Activated naive CD4-positive, alpha-beta T cell treated with anti-CD3 and anti-CD28 coated beads for 36 hours (primary cell): ENCODE measurements at regions of chr10 and their contacts with region 1.

Region 1: DNA sequence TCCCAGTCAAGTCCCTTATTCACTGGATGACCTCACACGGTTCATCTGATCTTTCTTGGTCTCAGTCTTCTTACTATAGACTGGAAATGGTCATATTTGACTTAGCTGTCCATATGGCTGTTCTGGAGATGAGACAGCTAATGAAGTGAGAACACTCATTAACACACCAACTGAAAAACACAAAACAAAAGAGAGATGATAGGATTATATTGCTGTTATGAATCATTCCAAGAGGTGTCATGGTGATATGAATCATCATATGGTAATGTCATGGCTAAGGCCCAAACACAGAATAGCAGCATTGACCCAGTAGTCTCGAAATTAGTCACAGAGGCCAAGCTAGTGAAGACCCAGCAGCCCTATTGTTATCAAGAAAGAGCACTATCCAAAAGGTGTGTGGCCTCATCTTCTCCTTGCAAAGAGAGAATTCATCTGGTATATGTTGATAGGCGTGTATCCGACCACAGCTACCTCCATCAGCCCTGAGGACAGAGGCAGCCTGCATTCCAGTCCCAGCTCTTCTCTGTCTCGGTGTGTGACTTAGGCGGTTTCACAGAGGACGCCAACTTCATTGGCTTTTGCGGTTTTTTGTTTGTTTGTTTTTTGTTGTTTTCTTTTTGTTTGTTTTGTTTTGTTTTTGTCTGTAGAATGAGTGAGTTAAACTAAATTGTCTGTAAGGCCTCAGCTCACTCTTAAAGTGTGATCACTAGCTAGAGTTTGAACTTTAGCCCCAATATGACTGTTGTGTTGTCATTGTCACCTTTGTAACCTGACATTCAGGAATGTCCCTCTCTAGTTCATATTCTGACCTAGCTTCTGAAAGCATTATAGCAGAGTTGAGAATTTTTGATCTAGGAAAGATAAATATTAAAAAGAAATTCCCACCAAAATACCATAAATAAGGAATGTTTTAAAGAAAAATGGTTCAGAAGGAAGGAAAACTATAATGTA is 97.4 kb upstream of the PDCD4 start:
- DNase-seq: peak; percentile 66
- H3K4me3 Mint-ChIP-seq: no peak overlapping the region
- H3K27ac Mint-ChIP-seq: peak overlapping the region; percentile 77
- H3K4me1 Mint-ChIP-seq: peaks cover 47% of the 10 kb centered on the region
- H3K27me3 Mint-ChIP-seq: no peaks in the 10 kb centered on the region

Region 2: GRCh38 chr10:109173121-109173520 is 1601.2 kb before region 1 on chr10:
- CTCF ChIA-PET with region 1: no interaction called
- intact Hi-C with region 1: no loop called
- DNase-seq: no peak
- H3K4me3 Mint-ChIP-seq: no peak overlapping the region
- H3K27ac Mint-ChIP-seq: no peak overlapping the region
- H3K4me1 Mint-ChIP-seq: no peaks in the 10 kb centered on the region
- H3K27me3 Mint-ChIP-seq: no peaks in the 10 kb centered on the region

Region 3: DNA sequence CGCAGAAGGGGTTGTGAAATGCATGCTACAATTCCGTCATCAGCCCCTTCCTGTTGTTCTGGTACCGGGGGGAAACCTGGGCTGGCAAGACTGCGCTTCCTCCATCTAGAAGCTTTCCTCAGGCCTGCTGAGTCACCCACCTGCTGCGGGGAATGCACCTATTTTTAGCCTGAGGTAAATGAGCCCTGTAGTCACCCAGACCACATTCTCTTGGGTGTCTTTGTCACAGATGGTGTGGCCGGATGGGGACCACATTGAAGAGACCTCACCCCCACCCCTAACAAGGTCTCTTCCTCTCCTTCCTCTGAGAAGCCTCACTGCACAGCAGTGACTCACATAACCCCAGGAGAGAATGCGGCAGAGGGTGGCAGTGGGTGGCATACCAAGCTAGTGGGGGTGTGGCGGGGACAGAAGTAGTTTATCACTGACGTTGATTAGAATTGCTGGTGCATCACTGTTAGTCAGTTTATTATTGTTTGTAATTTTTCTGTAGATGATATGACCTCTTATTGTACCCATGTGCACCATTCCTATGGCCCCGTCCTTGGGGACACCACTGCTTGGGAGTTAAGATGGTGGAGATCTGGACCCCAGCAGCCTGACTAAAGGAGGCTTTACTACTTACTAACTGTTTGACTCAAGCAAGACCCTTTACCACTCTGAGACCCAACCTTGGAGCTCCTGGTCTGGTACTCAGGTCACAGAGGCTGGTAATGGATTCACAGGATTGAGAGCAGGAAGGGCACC is 359.6 kb before region 1 on chr10:
- CTCF ChIA-PET with region 1: no interaction called
- intact Hi-C with region 1: loop called (anchors 5 kb)
- DNase-seq: peak; percentile 98
- H3K4me3 Mint-ChIP-seq: peak overlapping the region; percentile 41
- H3K27ac Mint-ChIP-seq: peak overlapping the region; percentile 84
- H3K4me1 Mint-ChIP-seq: peaks cover 73% of the 10 kb centered on the region
- H3K27me3 Mint-ChIP-seq: no peaks in the 10 kb centered on the region

Region 4: GRCh38 chr10:110746254-110746826 is 28.0 kb before region 1 on chr10:
- CTCF ChIA-PET with region 1: interaction called, 7 read pairs
- intact Hi-C with region 1: loop called (anchors 1 kb)
- DNase-seq: peak; percentile 64
- H3K4me3 Mint-ChIP-seq: no peak overlapping the region
- H3K27ac Mint-ChIP-seq: no peak overlapping the region
- H3K4me1 Mint-ChIP-seq: peaks cover 72% of the 10 kb centered on the region
- H3K27me3 Mint-ChIP-seq: no peaks in the 10 kb centered on the region

Region 5: DNA sequence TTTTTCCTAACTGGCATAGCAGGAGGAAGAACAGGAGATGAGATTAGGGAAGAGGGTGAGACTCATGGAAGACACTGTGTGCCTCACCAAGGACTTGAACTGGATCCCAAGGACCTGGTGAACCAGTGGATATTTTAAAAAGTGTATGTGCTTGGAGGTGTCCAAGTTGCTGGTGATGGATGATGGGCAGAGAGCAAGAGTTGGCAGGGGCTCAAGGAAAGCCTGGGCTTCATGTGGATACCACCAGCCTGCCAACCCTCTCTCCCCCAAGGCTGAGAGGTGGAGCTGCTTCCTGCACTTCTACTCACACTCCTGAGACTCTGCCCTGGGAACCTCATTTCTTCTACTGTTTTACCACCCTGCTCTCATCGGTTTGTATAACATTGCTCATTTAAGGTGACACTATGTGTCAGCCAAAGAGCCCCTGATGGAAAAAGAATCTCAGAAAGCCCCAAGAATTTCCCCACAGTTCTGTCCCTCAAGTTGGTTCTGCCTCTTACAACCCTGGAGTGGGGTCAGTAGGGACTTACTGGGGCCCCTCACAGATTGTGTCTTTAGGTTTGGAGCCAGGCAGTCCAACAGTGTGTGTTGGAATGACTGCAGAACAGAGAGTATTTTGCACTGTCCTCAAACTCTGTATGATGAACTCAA is 41.1 kb after region 1 on chr10:
- CTCF ChIA-PET with region 1: no interaction called
- intact Hi-C with region 1: loop called (anchors 1 kb)
- DNase-seq: peak; percentile 56
- H3K4me3 Mint-ChIP-seq: no peak overlapping the region
- H3K27ac Mint-ChIP-seq: peak overlapping the region; percentile 15
- H3K4me1 Mint-ChIP-seq: peaks cover 30% of the 10 kb centered on the region
- H3K27me3 Mint-ChIP-seq: no peaks in the 10 kb centered on the region

Region 6: DNA sequence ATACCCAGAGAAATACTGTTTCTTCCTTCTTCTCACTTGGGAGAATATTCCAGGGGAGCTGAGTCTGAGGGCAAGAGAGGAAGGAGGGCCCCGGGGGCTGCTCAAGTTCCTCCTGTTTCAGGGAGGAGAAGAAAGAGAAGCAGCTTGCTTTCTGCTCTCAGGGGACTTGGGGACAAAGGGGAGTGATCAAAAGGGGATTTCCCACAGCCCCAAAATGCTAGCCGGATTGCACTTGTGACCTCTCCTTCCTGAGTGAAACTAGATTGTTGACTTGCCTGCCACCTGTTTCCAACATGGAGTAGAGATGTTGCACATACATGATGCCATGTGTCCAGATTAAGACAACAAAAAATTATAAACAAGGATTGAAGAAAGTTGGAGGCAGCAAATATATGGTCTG is 68.7 kb after region 1 on chr10:
- CTCF ChIA-PET with region 1: no interaction called
- intact Hi-C with region 1: loop called (anchors 1 kb)
- DNase-seq: peak; percentile 77
- H3K4me3 Mint-ChIP-seq: no peak overlapping the region
- H3K27ac Mint-ChIP-seq: peak overlapping the region; percentile 65
- H3K4me1 Mint-ChIP-seq: peaks cover 43% of the 10 kb centered on the region
- H3K27me3 Mint-ChIP-seq: no peaks in the 10 kb centered on the region

Region 7: DNA sequence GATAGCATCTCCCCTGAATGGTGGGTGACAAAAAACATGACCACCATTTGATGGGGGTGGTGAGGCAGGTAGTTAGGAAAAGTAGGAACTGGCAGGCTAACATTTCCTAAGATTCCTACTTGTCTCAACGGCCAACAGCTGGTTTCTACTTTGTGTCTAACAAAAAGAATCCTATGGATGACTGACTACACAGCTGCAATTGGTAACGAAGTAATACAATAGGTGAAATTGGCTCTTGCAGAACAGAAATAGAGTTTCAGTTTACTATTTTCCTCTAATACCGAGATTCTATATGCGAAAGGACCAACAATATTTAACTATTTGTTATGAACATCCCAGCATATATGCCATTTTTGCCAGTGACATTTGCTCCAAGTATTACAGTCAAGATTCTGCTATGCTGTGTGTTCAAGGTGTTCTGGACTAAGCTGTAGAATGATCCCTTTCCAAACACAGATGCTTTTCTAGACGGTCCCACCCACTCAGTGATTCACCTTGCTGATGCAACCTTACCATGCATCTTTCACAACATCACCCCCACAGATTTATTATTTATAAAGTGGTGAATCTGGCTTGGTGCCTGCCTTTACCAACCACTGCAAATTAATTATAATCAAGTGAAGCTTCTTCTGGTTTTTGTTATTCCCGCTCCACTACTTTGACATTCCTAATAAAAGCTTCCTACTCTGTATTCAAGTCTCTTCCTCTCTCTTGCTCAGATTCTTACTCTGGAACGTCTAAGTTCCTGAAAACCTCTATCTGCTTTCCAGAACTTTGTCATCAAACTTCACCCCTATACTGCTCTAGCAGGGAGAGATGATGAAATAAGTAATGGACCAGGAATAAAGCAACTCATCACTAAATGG is 127.8 kb after region 1 on chr10:
- CTCF ChIA-PET with region 1: no interaction called
- intact Hi-C with region 1: loop called (anchors 1 kb)
- DNase-seq: peak; percentile 76
- H3K4me3 Mint-ChIP-seq: peak overlapping the region; percentile 17
- H3K27ac Mint-ChIP-seq: peak overlapping the region; percentile 74
- H3K4me1 Mint-ChIP-seq: peaks cover 44% of the 10 kb centered on the region
- H3K27me3 Mint-ChIP-seq: no peaks in the 10 kb centered on the region

Region 8: DNA sequence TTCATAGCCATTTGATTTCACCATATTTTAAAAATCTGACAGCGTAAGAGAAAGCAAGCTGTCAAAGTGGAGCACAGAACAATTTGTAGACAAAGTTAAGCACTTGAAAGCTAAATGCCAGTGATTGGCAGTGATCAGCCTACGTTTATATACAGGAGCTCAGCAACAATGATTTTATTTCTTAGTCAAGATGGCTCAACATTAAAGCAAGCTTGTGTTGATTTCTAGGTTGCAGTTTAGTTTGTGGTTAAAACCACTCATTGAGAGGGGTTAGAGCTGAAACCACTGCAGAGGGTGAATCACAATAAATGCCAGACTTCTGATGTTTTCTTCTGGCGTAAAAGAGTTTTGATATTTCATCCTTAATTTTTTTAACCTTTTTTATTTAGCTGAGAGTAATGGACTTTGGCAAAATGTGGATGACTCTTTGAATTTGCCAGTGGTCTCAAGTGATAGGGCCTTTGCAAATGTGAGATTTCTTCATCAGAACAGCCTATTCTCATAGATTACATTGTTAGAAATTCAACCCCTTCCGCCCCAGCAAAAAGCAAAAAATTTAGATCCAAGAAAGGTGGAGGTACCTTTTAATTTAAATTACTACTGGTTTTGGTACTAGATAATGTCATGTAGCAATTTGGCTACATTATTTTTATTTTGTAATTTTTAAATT is 218.8 kb after region 1 on chr10:
- CTCF ChIA-PET with region 1: no interaction called
- intact Hi-C with region 1: loop called (anchors 1 kb)
- DNase-seq: peak; percentile 21
- H3K4me3 Mint-ChIP-seq: no peak overlapping the region
- H3K27ac Mint-ChIP-seq: no peak overlapping the region
- H3K4me1 Mint-ChIP-seq: peaks cover 23% of the 10 kb centered on the region
- H3K27me3 Mint-ChIP-seq: no peaks in the 10 kb centered on the region

Region 9: DNA sequence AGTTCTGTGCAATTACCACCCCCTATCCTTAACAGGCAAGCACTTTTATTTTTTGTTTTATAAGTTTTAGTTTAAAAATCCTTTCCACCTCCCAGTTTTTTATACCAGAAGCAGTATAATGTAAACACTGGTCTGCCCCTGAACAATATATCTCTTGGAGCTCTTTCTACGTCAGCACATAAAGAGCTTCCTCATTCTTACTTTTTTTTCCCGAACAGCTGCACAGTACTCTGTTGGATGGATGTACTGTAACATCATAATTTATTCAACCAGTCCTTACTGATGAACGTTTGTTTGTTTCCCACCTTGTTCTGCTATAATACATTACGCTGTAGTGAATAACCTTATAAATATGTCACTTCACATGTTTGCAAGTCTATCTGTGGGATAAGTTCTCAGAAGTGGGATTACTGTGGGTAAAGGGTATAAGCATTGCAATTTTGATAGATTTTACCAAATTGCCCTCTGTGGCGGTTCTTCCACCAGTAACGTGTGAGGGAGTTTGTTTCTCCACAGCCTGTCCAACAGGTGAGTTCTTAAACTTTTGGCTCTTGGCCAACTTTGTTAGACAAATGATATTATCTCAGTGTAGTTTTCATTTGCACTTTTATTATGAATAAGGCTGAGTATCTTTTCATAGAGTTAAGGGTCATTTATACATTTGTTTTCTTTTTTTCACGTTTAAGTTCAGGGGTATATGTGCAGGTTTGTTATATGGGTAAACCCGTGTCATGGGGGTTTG is 335.3 kb after region 1 on chr10:
- CTCF ChIA-PET with region 1: no interaction called
- intact Hi-C with region 1: no loop called
- DNase-seq: no peak
- H3K4me3 Mint-ChIP-seq: no peak overlapping the region
- H3K27ac Mint-ChIP-seq: no peak overlapping the region
- H3K4me1 Mint-ChIP-seq: peaks cover 4% of the 10 kb centered on the region
- H3K27me3 Mint-ChIP-seq: no peaks in the 10 kb centered on the region